ENCODE measurements at regions of chr5 and their contacts with region 1.

Region 1: DNA sequence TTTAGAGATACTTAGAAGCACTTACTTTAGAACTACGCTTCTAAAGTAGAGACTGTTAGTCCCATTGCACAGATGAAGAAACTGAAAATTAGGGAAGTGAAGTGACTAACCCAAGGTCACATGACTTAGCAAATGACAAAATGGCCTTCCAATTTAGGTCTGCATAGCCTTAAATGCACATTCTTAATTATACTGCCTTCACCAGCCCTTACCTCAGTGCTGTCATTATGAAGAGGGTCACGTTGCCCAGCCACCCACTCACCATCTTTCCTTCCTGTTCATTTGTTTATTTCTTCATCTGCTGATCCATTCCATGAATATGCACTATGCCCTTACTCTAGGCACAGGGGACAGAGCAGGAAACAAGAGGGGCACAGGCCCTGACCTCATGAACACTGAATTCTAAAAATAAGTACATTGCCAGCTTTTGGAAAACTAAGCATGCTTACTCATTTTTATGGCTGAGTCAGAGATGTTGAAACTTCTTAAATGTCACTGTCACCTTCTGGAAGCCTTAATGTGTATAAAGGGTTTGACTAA is 8.6 kb downstream of the HAVCR2 start:
- DNase-seq: peak; percentile 61
- H3K4me3 Mint-ChIP-seq: peak overlapping the region; percentile 42
- H3K27ac Mint-ChIP-seq: peak overlapping the region; percentile 93
- H3K4me1 Mint-ChIP-seq: peaks cover 41% of the 10 kb centered on the region
- H3K27me3 Mint-ChIP-seq: no peaks in the 10 kb centered on the region

Region 2: DNA sequence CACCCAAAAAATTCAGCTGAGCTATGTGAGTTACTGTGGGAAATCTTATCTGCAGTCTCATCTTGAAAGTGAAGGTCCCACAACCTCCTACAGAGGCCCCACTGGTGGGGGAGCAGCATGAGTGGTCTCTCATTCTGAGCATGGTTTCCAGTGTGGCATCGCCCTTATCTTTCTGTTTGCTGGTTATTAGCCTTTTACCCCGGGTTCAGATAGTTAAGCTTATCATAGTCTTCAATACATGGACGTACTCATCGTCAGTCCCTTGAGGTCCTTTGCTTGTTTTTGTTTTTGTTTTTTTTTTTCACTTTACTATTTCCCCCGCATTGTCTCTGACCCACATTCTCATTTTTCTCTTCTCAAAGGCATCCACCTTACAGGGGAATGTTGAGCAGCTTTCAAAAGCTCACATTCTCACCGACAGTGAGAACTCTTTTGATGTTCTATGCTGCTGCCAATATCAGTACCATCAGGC is 16.3 kb after region 1 on chr5:
- intact Hi-C with region 1: loop called (anchors 2 kb)
- DNase-seq: peak; percentile 68
- H3K4me3 Mint-ChIP-seq: peak overlapping the region; percentile 26
- H3K27ac Mint-ChIP-seq: peak overlapping the region; percentile 70
- H3K4me1 Mint-ChIP-seq: peaks cover 33% of the 10 kb centered on the region
- H3K27me3 Mint-ChIP-seq: no peaks in the 10 kb centered on the region